ENCODE measurements at regions of chr17 and their contacts with region 1.

Region 1: GRCh38 chr17:8965394-8966168 is at the start of gene PIK3R5:
- DNase-seq: peak; percentile 66 to 89 (median 82)
- ATAC-seq: peak; percentile 76 to 79
- H3K4me3 Mint-ChIP-seq: peak within 1 kb of the TSS; percentile 83 to 100 (median 100)
- H3K27ac Mint-ChIP-seq: peak within 1 kb of the TSS; percentile 90 to 100 (median 98)
- H3K4me1 Mint-ChIP-seq: peaks cover 25 to 60% (median 54%) of the 10 kb centered on the region in 4 donors
- H3K27me3 Mint-ChIP-seq: no peaks in the 10 kb centered on the region
- polyA plus RNA-seq, gene PIK3R5: 20.0 to 44.0 (median 25.8) TPM

Region 2: GRCh38 chr17:8900626-8901585 is 64.7 kb before region 1 on chr17:
- POLR2A ChIA-PET with region 1: interaction called, 73 read pairs
- DNase-seq: peak in 7 of 10 donors; percentile 17 to 68 (median 43)
- ATAC-seq: no peak
- H3K4me3 Mint-ChIP-seq: peak overlapping the region; percentile 33 to 83 (median 58)
- H3K27ac Mint-ChIP-seq: peak overlapping the region; percentile 60 to 99 (median 96)
- H3K4me1 Mint-ChIP-seq: peaks cover 40 to 77% (median 70%) of the 10 kb centered on the region in 4 donors
- H3K27me3 Mint-ChIP-seq: peaks cover 0 to 2% (median 0%) of the 10 kb centered on the region in 5 donors

Region 3: DNA sequence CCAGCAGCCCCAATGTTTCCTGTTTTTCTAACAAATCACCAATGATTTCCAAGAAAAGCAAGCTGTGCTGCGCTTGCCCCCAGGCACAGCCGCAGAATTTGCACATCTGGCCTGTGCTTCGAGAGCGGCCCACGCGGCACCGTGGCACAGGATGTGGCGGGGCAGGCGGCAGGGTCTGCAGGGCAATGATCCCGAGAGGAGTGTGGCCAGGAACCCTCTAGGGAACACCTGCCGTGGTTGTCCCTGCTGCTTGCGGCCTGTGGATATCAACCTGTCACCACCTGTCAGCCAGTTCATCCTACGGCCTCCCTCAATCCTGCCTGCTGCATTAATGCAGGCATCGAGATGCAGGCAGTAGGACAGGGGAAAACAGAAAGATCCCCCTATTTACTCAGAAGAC is 24.1 kb before region 1 on chr17:
- POLR2A ChIA-PET with region 1: interaction called, 279 read pairs
- DNase-seq: peak; percentile 53 to 81 (median 66)
- ATAC-seq: peak; percentile 64 to 66
- H3K4me3 Mint-ChIP-seq: peak overlapping the region; percentile 67 to 91 (median 82)
- H3K27ac Mint-ChIP-seq: peak overlapping the region; percentile 91 to 99 (median 96)
- H3K4me1 Mint-ChIP-seq: peaks cover 59 to 96% (median 89%) of the 10 kb centered on the region in 4 donors
- H3K27me3 Mint-ChIP-seq: no peaks in the 10 kb centered on the region

Region 4: GRCh38 chr17:8954339-8954738 is 11.2 kb before region 1 on chr17:
- POLR2A ChIA-PET with region 1: interaction called, 279 read pairs
- DNase-seq: peak; percentile 65 to 91 (median 81)
- ATAC-seq: peak; percentile 93 to 98
- H3K4me3 Mint-ChIP-seq: peak overlapping the region; percentile 72 to 93 (median 87)
- H3K27ac Mint-ChIP-seq: peak overlapping the region; percentile 92 to 100 (median 98)
- H3K4me1 Mint-ChIP-seq: peaks cover 55 to 99% (median 94%) of the 10 kb centered on the region in 4 donors
- H3K27me3 Mint-ChIP-seq: no peaks in the 10 kb centered on the region

Region 5: GRCh38 chr17:9003355-9004131 is 38.0 kb after region 1 on chr17:
- POLR2A ChIA-PET with region 1: no interaction called
- DNase-seq: no peak
- ATAC-seq: peak in 1 of 2 donors; percentile 5
- H3K4me3 Mint-ChIP-seq: peak overlapping the region in 9 of 10 donors; percentile 36 to 75 (median 64)
- H3K27ac Mint-ChIP-seq: no peak overlapping the region
- H3K4me1 Mint-ChIP-seq: peaks cover 4 to 25% (median 17%) of the 10 kb centered on the region in 4 donors
- H3K27me3 Mint-ChIP-seq: peaks cover 34 to 78% (median 49%) of the 10 kb centered on the region in 5 donors

Measured in naive thymus-derived CD8-positive, alpha-beta T cell (primary cell).